Posterior cingulate gyrus (tissue), 11 donors: ENCODE measurements at regions of chr5 and their contacts with region 1.

Region 1: DNA sequence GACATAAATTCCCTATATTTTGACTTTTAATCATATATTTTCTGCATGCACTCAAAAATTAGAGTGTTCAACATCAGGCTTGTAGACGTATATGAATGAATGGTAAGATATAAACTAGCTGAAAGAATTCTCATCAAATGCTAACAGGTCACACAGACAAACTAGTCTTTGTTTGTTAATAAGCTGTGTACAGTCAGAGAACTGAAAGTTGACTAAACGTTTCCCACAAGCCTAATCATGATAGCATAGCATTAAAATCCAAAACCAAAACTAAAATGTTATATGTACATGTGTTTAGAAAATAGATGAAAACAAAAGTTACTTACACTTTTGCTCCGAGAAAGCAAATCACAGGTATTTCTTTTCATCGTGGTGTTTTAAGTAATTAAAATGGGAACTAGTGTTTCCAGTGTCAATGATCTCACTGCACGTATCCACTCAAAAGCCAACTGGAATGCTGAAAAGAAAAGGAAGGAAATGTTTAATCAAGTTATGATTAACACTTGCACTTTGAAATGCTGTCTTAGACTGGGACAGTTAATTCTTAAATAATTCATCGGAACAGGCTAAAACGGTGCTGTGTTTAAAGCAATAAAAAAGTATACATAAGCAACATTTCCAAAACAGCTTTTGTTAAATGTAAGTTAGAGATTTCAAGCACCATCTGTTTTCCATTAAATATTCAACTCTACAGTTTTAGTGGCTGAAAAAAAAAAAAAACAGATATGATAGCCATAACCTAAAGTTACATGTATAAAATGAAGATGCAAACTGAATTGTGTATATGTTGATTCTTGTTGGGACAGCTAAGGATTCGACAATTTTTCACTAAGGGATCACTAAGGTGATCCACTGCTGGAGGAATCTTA is 291.9 kb upstream of the PDE4D start:
- DNase-seq: no peak

Region 2: DNA sequence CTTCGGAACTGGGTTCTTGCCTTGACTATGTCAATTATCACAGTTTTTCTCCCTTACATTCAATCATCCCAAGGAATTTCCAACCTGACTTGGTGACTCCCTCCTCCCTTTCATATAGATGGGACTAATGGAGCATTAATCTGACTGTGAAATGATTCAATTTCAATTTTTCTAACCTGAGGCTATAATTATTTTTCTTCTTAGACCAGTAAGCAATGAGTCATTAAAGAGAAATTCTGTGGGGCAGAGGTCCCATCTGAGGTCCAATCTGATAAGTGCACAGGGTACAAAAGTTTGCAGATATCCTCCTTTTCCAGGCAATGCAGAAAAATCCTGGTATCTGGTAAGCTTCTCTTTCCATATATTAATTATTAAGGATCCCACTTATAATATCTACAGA is 310.8 kb before region 1 on chr5:
- intact Hi-C with region 1: no loop called
- DNase-seq: no peak

Region 3: GRCh38 chr5:60633341-60633740 is 447.9 kb after region 1 on chr5:
- intact Hi-C with region 1: loop called (anchors 5 kb)
- DNase-seq: peak in 3 of 10 donors; percentile 12 to 72 (median 67)